ENCODE measurements at regions of chr2 and their contacts with region 1.

Region 1: DNA sequence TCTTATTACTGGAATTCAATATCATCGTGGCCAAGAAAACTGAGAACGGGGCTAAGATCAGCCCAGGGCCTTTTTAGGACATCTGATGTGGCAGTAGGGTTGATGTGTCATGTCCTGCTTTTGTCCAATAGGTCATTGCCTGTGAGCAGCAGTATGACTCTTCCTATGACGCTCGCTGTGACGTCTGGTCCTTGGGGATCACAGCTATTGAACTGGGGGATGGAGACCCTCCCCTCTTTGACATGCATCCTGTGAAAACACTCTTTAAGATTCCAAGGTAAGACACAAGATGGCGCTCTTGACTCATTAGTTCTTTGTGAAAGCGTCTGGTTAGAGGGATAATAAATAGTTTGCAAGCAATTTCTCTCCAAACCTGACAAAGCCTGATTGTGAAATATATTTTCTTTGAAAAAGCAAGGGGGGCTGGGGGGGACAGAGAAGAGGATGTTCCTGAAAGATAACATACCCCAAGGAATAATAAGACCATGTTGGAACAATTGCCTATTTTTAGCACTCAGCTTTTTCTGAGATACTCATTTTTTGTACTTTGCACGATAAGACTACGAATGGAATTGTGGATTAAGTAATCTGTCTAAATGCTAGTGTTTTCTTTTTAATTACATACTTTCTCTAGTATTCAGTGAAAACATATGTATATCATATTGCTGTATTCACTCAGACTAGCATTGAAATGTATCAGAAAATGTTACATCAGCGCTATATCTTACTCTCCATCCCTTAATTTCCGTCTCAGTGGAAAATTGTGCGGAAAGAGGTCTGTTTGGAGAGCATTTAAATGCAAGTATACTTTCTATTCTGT is 58.1 kb downstream of the MYO3B start:
- DNase-seq: peak; percentile 70
- H3K4me3 Mint-ChIP-seq: no peak overlapping the region
- H3K27ac Mint-ChIP-seq: no peak overlapping the region
- H3K4me1 Mint-ChIP-seq: no peaks in the 10 kb centered on the region
- H3K27me3 Mint-ChIP-seq: peaks cover 41% of the 10 kb centered on the region
- CTCF ChIP-seq: peak; percentile 60

Region 2: GRCh38 chr2:170221317-170222288 is 14.5 kb before region 1 on chr2:
- CTCF ChIA-PET with region 1: interaction called, 14 read pairs
- POLR2A ChIA-PET with region 1: interaction called, 5 read pairs
- intact Hi-C with region 1: no loop called
- DNase-seq: peak; percentile 60
- H3K4me3 Mint-ChIP-seq: peak overlapping the region; percentile 60
- H3K27ac Mint-ChIP-seq: peak overlapping the region; percentile 99
- H3K4me1 Mint-ChIP-seq: peaks cover 16% of the 10 kb centered on the region
- H3K27me3 Mint-ChIP-seq: no peaks in the 10 kb centered on the region
- CTCF ChIP-seq: no peak

Region 3: DNA sequence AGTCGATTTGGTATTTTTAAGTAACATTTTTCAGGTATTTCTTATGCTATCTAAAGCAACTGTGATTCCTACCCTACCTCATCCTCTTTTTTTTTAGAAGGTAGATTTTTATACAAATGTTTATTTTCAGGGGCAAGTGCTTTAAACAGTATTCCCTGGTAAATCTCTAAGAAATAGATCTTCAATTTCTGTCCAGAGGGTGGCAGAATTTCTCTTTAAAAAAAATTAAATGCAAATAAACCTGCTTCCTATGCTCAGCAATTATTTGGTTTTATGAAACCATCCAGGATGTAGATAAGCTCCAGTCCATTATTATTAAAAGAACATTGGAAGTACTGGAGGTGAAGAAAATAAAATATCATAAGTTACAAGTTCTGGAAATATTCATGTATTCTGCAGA is 133.8 kb after region 1 on chr2:
- CTCF ChIA-PET with region 1: interaction called, 7 read pairs
- POLR2A ChIA-PET with region 1: no interaction called
- intact Hi-C with region 1: loop called (anchors 2 kb)
- DNase-seq: peak; percentile 32
- H3K4me3 Mint-ChIP-seq: no peak overlapping the region
- H3K27ac Mint-ChIP-seq: no peak overlapping the region
- H3K4me1 Mint-ChIP-seq: peaks cover 8% of the 10 kb centered on the region
- H3K27me3 Mint-ChIP-seq: peaks cover 49% of the 10 kb centered on the region
- CTCF ChIP-seq: no peak

Region 4: GRCh38 chr2:170509452-170510193 is 273.6 kb after region 1 on chr2:
- CTCF ChIA-PET with region 1: no interaction called
- POLR2A ChIA-PET with region 1: no interaction called
- intact Hi-C with region 1: no loop called
- DNase-seq: no peak
- H3K4me3 Mint-ChIP-seq: no peak overlapping the region
- H3K27ac Mint-ChIP-seq: no peak overlapping the region
- H3K4me1 Mint-ChIP-seq: peaks cover 6% of the 10 kb centered on the region
- H3K27me3 Mint-ChIP-seq: no peaks in the 10 kb centered on the region
- CTCF ChIP-seq: no peak